PC-9 (cell line): ENCODE measurements at regions of chr2 and their contacts with region 1.

Region 1: DNA sequence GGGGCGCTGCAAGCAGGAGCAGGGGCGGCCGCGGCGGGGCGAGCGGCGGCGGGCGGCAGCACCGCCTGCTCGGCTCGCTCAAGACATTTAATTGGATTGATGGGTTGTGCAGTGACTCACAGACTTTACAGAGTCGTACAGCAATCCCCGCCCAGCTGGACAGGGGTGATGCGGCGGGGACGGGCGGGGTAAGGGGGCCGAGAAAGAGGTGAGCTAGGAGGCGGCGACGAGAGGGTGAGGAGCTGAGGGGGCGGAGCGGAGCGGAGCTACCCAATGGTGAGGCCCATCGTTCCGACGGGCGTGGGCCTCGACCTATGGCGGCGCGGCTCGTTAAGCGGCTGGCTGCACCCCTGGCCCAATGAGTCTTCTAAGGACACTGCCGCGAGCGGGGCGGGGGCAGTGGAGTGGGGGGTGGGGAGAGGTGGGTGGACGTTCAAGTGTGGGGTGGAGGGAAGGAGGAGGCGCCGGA is 97.1 kb upstream of the SERTAD2 start:
- DNase-seq: peak; percentile 98 to 99
- H3K4me3 ChIP-seq: peak overlapping the region; percentile 75
- H3K27ac ChIP-seq: peak overlapping the region; percentile 51
- H3K4me1 ChIP-seq: peaks cover 38% of the 10 kb centered on the region
- H3K27me3 ChIP-seq: no peaks in the 10 kb centered on the region
- CTCF ChIP-seq: no peak

Region 2: GRCh38 chr2:64523666-64524603 is 226.9 kb before region 1 on chr2 and contains the start of gene AFTPH:
- CTCF ChIA-PET with region 1: no interaction called
- POLR2A ChIA-PET with region 1: no interaction called
- intact Hi-C with region 1: no loop called
- DNase-seq: peak; percentile 98 to 99
- H3K4me3 ChIP-seq: peak within 1 kb of the TSS; percentile 67
- H3K27ac ChIP-seq: peak within 1 kb of the TSS; percentile 72
- H3K4me1 ChIP-seq: peaks cover 18% of the 10 kb centered on the region
- H3K27me3 ChIP-seq: no peaks in the 10 kb centered on the region
- CTCF ChIP-seq: no peak
- total RNA-seq, gene AFTPH: 34.4 and 40.5 TPM in 2 replicates

Region 3: GRCh38 chr2:64586883-64587481 is 163.9 kb before region 1 on chr2:
- CTCF ChIA-PET with region 1: interaction called, 5 read pairs
- POLR2A ChIA-PET with region 1: no interaction called
- intact Hi-C with region 1: loop called (anchors 2 kb)
- DNase-seq: peak in 1 of 2 experiments; percentile 49
- H3K4me3 ChIP-seq: no peak overlapping the region
- H3K27ac ChIP-seq: no peak overlapping the region
- H3K4me1 ChIP-seq: no peaks in the 10 kb centered on the region
- H3K27me3 ChIP-seq: no peaks in the 10 kb centered on the region
- CTCF ChIP-seq: peak; percentile 88

Region 4: DNA sequence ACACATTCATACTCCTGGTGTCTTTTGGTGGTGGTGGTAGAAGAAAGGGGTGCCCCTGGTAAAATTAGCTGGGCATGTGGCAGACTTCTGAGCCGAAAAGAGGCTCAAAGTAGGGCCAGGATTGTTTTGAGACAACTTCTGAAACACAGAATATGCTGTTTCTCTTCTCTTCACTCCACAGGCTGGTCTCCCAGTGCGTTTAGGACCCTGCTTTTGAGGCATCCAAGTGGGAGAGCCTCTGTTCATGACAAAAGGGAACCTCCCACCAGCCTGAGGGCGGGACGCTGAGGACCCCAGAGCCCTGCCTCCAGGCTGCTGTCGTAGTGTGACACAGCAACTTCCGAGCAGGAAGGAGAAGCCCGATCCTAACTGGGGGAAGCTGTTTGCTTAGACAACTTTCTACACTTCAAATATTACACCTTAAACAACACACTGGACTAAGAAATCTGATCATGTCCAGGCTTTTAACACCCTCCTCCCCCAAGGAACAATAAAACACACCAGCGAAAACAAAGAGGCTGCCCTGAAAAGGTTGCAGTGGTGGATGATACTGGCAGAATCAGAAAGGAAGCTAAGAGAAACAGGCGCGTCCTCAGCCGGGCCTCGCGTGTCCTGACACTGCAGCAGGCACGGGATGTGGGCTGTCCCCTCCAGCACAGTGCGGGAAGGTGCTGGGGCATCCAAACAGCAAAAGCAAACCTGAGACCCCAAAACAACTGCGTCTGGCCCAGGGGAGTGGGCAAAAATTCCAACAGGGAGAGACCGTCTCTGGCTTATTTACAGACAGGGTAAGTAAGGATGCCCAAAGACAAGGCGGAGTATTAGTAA is 106.5 kb before region 1 on chr2:
- CTCF ChIA-PET with region 1: interaction called, 17 read pairs
- POLR2A ChIA-PET with region 1: interaction called, 16 read pairs
- intact Hi-C with region 1: loop called (anchors 1 kb)
- DNase-seq: peak; percentile 83 to 85
- H3K4me3 ChIP-seq: peak overlapping the region; percentile 60
- H3K27ac ChIP-seq: peak overlapping the region; percentile 97
- H3K4me1 ChIP-seq: peaks cover 78% of the 10 kb centered on the region
- H3K27me3 ChIP-seq: no peaks in the 10 kb centered on the region
- CTCF ChIP-seq: no peak

Region 5: GRCh38 chr2:64685438-64685837 is 65.4 kb before region 1 on chr2:
- CTCF ChIA-PET with region 1: no interaction called
- POLR2A ChIA-PET with region 1: no interaction called
- intact Hi-C with region 1: loop called (anchors 5 kb)
- DNase-seq: peak; percentile 5 to 95
- H3K4me3 ChIP-seq: peak overlapping the region; percentile 9; the same call in 1 of the 2 replicates
- H3K27ac ChIP-seq: 0 out of 2 replicates have a peak overlapping the region, but pooled peaks have one; percentile 19
- H3K4me1 ChIP-seq: peaks cover 29% of the 10 kb centered on the region
- H3K27me3 ChIP-seq: no peaks in the 10 kb centered on the region
- CTCF ChIP-seq: no peak

Region 6: DNA sequence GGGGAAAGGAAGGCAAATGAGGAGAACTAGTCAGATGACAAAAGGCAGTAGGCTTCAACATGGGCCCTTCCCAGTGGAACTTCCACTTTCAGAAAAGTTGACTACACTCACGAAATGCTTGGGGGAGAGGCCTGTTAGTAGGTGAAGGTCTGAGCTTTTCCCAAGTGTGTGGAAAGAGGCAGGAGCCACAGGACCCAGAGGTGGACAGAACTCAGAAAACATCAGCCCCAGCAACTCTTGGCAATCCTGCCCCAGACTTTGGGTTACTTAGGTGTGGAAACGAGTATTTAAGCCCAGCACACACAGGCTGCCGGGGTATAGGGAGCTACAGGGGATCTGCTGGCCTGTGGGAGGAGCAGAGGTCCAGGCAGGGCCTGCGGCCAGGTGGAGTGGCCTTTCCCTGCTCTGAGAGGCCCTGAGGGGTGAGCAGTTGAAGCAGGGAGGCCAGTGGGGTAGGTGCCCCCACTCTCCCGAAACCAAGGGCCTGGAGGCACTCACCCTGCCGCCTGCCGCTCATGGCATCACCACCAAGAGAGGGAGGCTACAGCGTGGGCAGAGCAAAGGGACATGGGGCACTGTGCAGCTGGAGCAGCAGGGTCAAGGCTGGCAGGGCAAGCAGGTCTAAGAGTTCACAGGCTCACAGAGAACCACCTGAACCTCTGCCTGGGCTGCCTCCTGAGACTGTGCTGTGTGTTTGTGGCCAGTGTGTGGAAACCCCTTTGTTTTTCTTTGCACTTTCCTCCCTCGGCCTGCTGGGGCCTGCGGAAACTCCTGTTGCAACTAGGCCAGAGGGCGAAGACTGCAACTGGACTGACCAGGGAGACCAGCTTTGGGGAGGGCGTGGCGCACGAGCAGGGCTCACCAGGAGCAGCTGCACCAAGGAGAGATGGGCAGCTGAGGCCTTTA is 33.6 kb after region 1 on chr2:
- CTCF ChIA-PET with region 1: interaction called, 12 read pairs
- POLR2A ChIA-PET with region 1: interaction called, 9 read pairs
- intact Hi-C with region 1: loop called (anchors 1 kb)
- DNase-seq: peak; percentile 90 to 95
- H3K4me3 ChIP-seq: peak overlapping the region; percentile 33; the same call in 1 of the 2 replicates
- H3K27ac ChIP-seq: peak overlapping the region; percentile 93
- H3K4me1 ChIP-seq: peaks cover 96% of the 10 kb centered on the region
- H3K27me3 ChIP-seq: no peaks in the 10 kb centered on the region
- CTCF ChIP-seq: no peak

Region 7: DNA sequence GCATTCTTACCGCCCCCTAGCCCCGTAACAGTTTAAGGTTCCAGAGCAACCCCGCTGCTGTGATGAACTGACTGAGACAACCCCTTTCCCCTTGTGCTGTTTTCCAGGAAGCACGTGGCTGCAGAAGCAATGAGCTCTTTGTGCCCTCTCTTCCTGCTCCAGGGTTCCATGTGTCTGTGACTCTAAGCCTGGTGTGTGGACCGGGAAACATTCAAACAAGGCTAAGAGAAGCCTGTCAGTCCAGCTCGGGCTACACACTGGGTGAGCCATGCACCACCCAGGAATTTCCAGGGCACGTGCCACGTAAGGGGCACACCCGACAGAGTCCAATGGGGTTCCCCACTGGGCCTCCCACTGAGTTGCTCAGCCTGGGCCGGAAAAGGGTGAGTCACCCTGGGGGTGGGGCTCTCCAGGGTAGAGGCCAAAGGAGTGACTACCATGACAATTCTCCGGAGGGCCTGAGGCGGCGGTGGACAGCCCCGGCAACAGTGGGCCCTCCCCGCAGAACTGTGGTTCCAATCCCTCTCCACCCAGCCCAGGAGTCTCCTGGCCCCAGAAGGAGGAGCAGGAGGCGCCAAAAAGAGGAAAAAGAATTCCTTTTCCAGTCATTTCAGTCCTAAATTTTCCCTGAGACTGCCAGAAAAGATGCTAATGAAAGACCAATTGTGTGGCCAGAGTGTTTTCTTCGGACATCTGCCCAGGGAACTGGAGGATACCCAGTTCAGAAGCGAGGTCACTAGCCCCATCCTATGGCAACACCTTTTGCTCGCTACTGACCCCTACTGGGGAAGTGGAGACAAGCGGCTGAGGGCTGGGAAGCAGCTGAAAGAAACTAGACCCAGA is 80.5 kb after region 1 on chr2:
- CTCF ChIA-PET with region 1: interaction called, 4 read pairs
- POLR2A ChIA-PET with region 1: interaction called, 18 read pairs
- intact Hi-C with region 1: loop called (anchors 1 kb)
- DNase-seq: peak; percentile 99 to 100
- H3K4me3 ChIP-seq: peak overlapping the region; percentile 36; the same call in 1 of the 2 replicates
- H3K27ac ChIP-seq: peak overlapping the region; percentile 83
- H3K4me1 ChIP-seq: peaks cover 53% of the 10 kb centered on the region
- H3K27me3 ChIP-seq: no peaks in the 10 kb centered on the region
- CTCF ChIP-seq: peak; percentile 99

Region 8: GRCh38 chr2:64865073-64865830 is 114.4 kb after region 1 on chr2:
- CTCF ChIA-PET with region 1: no interaction called
- POLR2A ChIA-PET with region 1: interaction called, 38 read pairs
- intact Hi-C with region 1: loop called (anchors 1 kb)
- DNase-seq: peak; percentile 46 to 74
- H3K4me3 ChIP-seq: peak overlapping the region; percentile 89
- H3K27ac ChIP-seq: peak overlapping the region; percentile 74
- H3K4me1 ChIP-seq: peaks cover 39% of the 10 kb centered on the region
- H3K27me3 ChIP-seq: no peaks in the 10 kb centered on the region
- CTCF ChIP-seq: no peak; the same call in 1 of the 2 replicates